CD8-positive, alpha-beta T cell (primary cell): ENCODE measurements at regions of chrX and their contacts with region 1.

Region 1: GRCh38 chrX:153816831-153817690 is 13.3 kb downstream of the PDZD4 start:
- DNase-seq: peak in 8 of 9 experiments; percentile 7 to 77 (median 46)
- ATAC-seq: peak; percentile 63
- H3K4me3 ChIP-seq: no peak overlapping the region
- H3K4me3 Mint-ChIP-seq: peak overlapping the region; percentile 55
- H3K27ac ChIP-seq: no peak overlapping the region
- H3K27ac Mint-ChIP-seq: peak overlapping the region; percentile 45
- H3K4me1 ChIP-seq: peaks cover 42% of the 10 kb centered on the region
- H3K4me1 Mint-ChIP-seq: peaks cover 40% of the 10 kb centered on the region
- H3K27me3 ChIP-seq: no peaks in the 10 kb centered on the region
- H3K27me3 Mint-ChIP-seq: no peaks in the 10 kb centered on the region
- CTCF ChIP-seq: peak; percentile 28

Region 2: DNA sequence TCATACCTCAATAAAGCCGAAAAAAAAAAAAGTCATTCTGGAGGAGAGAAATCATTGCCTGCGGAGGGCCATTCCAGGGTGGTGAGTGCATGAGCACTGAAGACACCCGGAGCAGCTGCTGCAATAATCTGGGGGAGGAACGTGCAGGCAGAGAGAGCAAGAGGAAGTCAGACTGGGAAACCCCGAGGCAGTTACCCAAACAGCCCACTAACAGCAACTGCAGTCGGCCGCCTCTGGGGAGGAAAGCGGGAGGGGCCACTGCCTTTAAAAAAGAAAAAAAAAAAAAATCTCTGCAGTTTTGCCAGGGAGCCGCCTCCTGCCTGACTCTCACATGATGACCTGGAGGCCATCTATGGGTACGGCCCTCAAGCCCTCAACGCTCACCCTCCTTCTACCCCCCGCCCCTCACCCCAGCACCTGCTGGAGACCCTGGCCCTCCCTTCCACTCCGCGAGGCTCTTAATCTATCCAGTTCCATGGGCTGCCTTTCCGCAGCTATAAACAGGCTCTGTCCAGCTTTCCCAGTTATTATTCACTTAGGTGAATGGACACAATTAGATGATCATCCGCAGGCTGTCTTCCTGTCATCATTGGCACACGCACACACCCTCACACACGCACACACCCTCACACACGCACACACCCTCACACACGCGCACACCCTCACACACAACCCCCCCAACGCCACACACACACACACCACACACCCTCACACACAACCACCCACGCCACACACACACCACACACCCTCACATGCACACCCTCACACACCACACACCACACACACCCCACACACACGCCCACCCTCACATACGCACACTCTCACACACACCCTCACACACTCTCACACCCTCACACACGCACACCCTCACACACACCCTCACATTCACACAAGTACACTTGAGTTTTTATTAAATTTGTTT is 84.0 kb after region 1 on chrX:
- CTCF ChIA-PET with region 1: no interaction called
- POLR2A ChIA-PET with region 1: interaction called, 4 read pairs
- intact Hi-C with region 1: loop called in 1 of 2 experiments (anchors 2 kb)
- DNase-seq: peak; percentile 24 to 87 (median 58)
- ATAC-seq: peak; percentile 87
- H3K4me3 ChIP-seq: no peak overlapping the region
- H3K4me3 Mint-ChIP-seq: peak overlapping the region; percentile 46
- H3K27ac ChIP-seq: no peak overlapping the region
- H3K27ac Mint-ChIP-seq: no peak overlapping the region
- H3K4me1 ChIP-seq: peaks cover 55% of the 10 kb centered on the region
- H3K4me1 Mint-ChIP-seq: peaks cover 42% of the 10 kb centered on the region
- H3K27me3 ChIP-seq: no peaks in the 10 kb centered on the region
- H3K27me3 Mint-ChIP-seq: no peaks in the 10 kb centered on the region
- CTCF ChIP-seq: no peak